ENCODE measurements at regions of chr12 and their contacts with region 1.

Region 1: GRCh38 chr12:66860752-66861750 is 182.2 kb upstream of the GRIP1 start:
- DNase-seq: peak; percentile 27 to 69 (median 57)
- ATAC-seq: peak; percentile 78
- H3K4me3 ChIP-seq: no peak overlapping the region
- H3K4me3 Mint-ChIP-seq: no peak overlapping the region
- H3K27ac ChIP-seq: no peak overlapping the region
- H3K27ac Mint-ChIP-seq: no peak overlapping the region
- H3K4me1 ChIP-seq: no peaks in the 10 kb centered on the region
- H3K4me1 Mint-ChIP-seq: peaks cover 4 to 24% (median 14%) of the 10 kb centered on the region in 7 donors
- H3K27me3 ChIP-seq: no peaks in the 10 kb centered on the region
- H3K27me3 Mint-ChIP-seq: peaks cover 0 to 11% (median 9%) of the 10 kb centered on the region in 5 donors

Region 2: GRCh38 chr12:65556681-65557437 is 1304.2 kb before region 1 on chr12:
- CTCF ChIA-PET with region 1: no interaction called
- POLR2A ChIA-PET with region 1: no interaction called
- intact Hi-C with region 1: loop called in 1 of 2 experiments (anchors 2 kb)
- DNase-seq: peak; percentile 4 to 59 (median 47)
- ATAC-seq: peak; percentile 86
- H3K4me3 ChIP-seq: no peak overlapping the region
- H3K4me3 Mint-ChIP-seq: no peak overlapping the region
- H3K27ac ChIP-seq: no peak overlapping the region
- H3K27ac Mint-ChIP-seq: no peak overlapping the region
- H3K4me1 ChIP-seq: no peaks in the 10 kb centered on the region
- H3K4me1 Mint-ChIP-seq: peaks cover 0 to 8% (median 6%) of the 10 kb centered on the region in 7 donors
- H3K27me3 ChIP-seq: peaks cover 5% of the 10 kb centered on the region in 2 donors
- H3K27me3 Mint-ChIP-seq: peaks cover 0 to 22% (median 19%) of the 10 kb centered on the region in 5 donors

Region 3: GRCh38 chr12:66279123-66279712 is 581.8 kb before region 1 on chr12:
- CTCF ChIA-PET with region 1: no interaction called
- POLR2A ChIA-PET with region 1: no interaction called
- intact Hi-C with region 1: loop called (anchors 2 to 10 kb)
- DNase-seq: peak in 6 of 9 donors; percentile 33 to 58 (median 52)
- ATAC-seq: peak; percentile 76
- H3K4me3 ChIP-seq: no peak overlapping the region
- H3K4me3 Mint-ChIP-seq: peak overlapping the region in 8 of 10 donors; percentile 2 to 67 (median 20)
- H3K27ac ChIP-seq: no peak overlapping the region
- H3K27ac Mint-ChIP-seq: peak overlapping the region in 4 of 9 donors; percentile 22 to 78 (median 49)
- H3K4me1 ChIP-seq: peaks cover 17 to 38% of the 10 kb centered on the region in 2 donors
- H3K4me1 Mint-ChIP-seq: peaks cover 33 to 70% (median 52%) of the 10 kb centered on the region in 7 donors
- H3K27me3 ChIP-seq: no peaks in the 10 kb centered on the region
- H3K27me3 Mint-ChIP-seq: no peaks in the 10 kb centered on the region

Region 4: GRCh38 chr12:66409195-66409871 is 451.7 kb before region 1 on chr12:
- CTCF ChIA-PET with region 1: no interaction called
- POLR2A ChIA-PET with region 1: no interaction called
- intact Hi-C with region 1: loop called in 1 of 2 experiments (anchors 5 kb)
- DNase-seq: peak in 8 of 9 donors; percentile 26 to 67 (median 58)
- ATAC-seq: peak; percentile 61
- H3K4me3 ChIP-seq: no peak overlapping the region
- H3K4me3 Mint-ChIP-seq: no peak overlapping the region
- H3K27ac ChIP-seq: no peak overlapping the region
- H3K27ac Mint-ChIP-seq: peak overlapping the region in 1 of 9 donors; percentile 46
- H3K4me1 ChIP-seq: no peaks in the 10 kb centered on the region
- H3K4me1 Mint-ChIP-seq: peaks cover 0 to 7% (median 0%) of the 10 kb centered on the region in 7 donors
- H3K27me3 ChIP-seq: no peaks in the 10 kb centered on the region
- H3K27me3 Mint-ChIP-seq: peaks cover 4 to 26% (median 14%) of the 10 kb centered on the region in 5 donors

Region 5: DNA sequence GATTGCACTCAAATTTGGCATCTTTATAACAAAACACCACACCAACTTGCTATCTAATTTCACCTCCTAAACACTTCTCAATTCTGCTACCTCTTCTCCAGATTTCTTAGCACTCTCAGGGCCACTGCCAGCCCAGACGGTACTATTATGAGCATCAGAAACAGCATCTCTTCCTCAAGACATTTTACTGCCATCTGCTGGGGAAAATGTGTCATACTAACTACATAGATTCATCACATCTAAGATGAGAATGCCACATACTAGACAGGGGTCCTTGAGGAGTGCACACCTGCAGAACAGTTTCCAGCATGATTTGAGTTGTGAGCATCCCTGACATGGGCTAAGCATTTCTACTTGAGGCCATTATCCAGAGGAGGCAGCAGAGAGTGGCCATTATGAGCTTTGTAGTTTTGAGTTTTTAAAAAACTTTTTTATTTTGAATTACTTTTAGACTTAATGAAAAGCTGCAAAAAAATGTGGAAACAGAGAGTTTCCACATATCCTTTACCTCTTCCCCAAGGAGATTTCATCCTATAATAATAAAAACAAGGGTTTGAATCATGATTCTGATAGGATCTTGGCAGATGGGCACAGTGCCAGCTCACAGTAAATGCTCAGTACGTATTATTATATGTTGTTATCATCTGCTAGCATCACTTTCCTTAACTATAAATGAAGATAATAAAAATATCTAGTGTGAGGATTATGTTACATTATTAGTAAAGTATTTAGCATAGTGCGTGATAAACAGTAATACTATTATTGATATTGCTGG is 167.0 kb before region 1 on chr12:
- CTCF ChIA-PET with region 1: interaction called, 29 read pairs
- POLR2A ChIA-PET with region 1: no interaction called
- intact Hi-C with region 1: loop called (anchors 1 kb)
- DNase-seq: peak in 7 of 9 donors; percentile 25 to 57 (median 50)
- ATAC-seq: peak; percentile 89
- H3K4me3 ChIP-seq: no peak overlapping the region
- H3K4me3 Mint-ChIP-seq: no peak overlapping the region
- H3K27ac ChIP-seq: no peak overlapping the region
- H3K27ac Mint-ChIP-seq: no peak overlapping the region
- H3K4me1 ChIP-seq: no peaks in the 10 kb centered on the region
- H3K4me1 Mint-ChIP-seq: peaks cover 3 to 24% (median 18%) of the 10 kb centered on the region in 7 donors
- H3K27me3 ChIP-seq: no peaks in the 10 kb centered on the region
- H3K27me3 Mint-ChIP-seq: peaks cover 0 to 8% (median 0%) of the 10 kb centered on the region in 5 donors

Region 6: GRCh38 chr12:66717036-66717673 is 143.9 kb before region 1 on chr12:
- CTCF ChIA-PET with region 1: interaction called, 5 read pairs
- POLR2A ChIA-PET with region 1: no interaction called
- intact Hi-C with region 1: loop called (anchors 1 to 2 kb)
- DNase-seq: no peak
- ATAC-seq: no peak
- H3K4me3 ChIP-seq: no peak overlapping the region
- H3K4me3 Mint-ChIP-seq: no peak overlapping the region
- H3K27ac ChIP-seq: no peak overlapping the region
- H3K27ac Mint-ChIP-seq: peak overlapping the region in 1 of 9 donors; percentile 97
- H3K4me1 ChIP-seq: peaks cover 0 to 18% of the 10 kb centered on the region in 2 donors
- H3K4me1 Mint-ChIP-seq: peaks cover 8 to 40% (median 25%) of the 10 kb centered on the region in 7 donors
- H3K27me3 ChIP-seq: no peaks in the 10 kb centered on the region
- H3K27me3 Mint-ChIP-seq: peaks cover 0 to 19% (median 0%) of the 10 kb centered on the region in 5 donors

Region 7: DNA sequence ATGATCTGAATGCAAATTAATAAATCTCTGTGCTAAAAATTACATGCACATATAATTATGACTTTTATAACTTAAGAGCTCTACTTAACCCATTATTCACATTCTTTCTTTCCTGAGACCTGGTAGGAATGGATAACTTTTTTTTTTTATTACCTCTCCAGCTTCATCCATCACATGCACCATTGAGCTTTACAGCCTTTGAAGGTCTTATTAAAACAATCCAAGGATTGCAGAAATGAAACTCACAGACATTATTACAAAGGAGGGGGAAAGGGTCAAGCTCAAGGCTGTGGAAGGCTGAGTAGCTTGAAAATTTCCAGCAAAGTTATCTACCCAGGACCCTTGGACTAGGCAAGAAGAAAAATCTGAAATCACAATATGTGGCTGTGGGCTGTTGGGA is 20.3 kb after region 1 on chr12:
- CTCF ChIA-PET with region 1: interaction called, 12 read pairs
- POLR2A ChIA-PET with region 1: interaction called, 3 read pairs
- intact Hi-C with region 1: no loop called
- DNase-seq: no peak
- ATAC-seq: no peak
- H3K4me3 ChIP-seq: no peak overlapping the region
- H3K4me3 Mint-ChIP-seq: no peak overlapping the region
- H3K27ac ChIP-seq: no peak overlapping the region
- H3K27ac Mint-ChIP-seq: no peak overlapping the region
- H3K4me1 ChIP-seq: no peaks in the 10 kb centered on the region
- H3K4me1 Mint-ChIP-seq: peaks cover 0 to 6% (median 0%) of the 10 kb centered on the region in 7 donors
- H3K27me3 ChIP-seq: peaks cover 0 to 4% of the 10 kb centered on the region in 2 donors
- H3K27me3 Mint-ChIP-seq: peaks cover 0 to 22% (median 11%) of the 10 kb centered on the region in 5 donors